ENCODE measurements at regions of chr7 and their contacts with region 1.

Region 1: DNA sequence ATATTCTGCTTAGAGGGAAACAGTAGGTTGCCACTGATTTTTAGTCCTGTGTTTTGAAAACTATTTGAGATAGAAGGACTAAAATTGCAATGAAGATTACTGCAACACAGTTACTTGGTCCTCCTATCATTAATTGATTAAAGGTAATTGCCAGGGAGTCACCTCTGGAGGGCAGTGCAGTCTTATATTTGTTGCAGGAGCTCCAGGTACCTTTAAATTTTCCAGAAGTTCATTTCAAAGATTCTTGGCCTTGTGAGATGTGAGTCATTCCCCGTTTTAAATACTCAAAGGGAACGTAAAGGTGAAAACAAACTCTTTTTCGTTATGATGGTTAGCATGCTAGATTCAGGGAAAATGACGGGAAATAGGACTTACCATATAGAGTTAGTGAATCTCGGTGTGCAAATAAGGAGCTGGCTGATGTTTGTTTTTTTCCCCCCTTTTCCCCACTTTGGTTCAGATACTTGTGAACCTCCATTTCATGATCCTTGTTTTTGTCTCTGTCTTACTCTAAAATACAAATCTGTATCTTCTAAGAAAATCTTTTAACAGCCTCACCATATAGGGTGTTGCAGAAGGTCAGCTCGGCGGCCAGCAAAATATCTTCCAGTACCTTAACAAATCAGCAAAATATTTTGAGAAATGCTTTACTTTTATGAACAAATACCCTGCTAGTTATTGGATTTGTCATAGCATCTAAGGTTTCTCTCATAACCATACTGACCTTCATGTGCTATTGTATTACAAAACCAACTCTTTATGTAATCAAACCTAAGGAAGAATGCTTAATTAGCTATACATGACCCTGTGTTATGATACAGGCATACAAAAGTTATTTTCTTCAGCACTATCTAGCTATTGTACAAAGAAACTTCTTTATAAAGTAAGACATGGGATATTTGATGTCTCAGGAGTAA is 143.0 kb upstream of the HDAC9 start:
- DNase-seq: no peak
- ATAC-seq: peak; percentile 74
- H3K4me3 ChIP-seq: no peak overlapping the region
- H3K27ac ChIP-seq: no peak overlapping the region
- H3K4me1 ChIP-seq: no peaks in the 10 kb centered on the region
- H3K27me3 ChIP-seq: no peaks in the 10 kb centered on the region
- CTCF ChIP-seq: peak; percentile 42 to 73 (median 63); a peak in 5 of 6 replicates
- EP300 ChIP-seq: no peak
- POLR2A ChIP-seq: no peak
- RAD21 ChIP-seq: peak; percentile 81

Region 2: DNA sequence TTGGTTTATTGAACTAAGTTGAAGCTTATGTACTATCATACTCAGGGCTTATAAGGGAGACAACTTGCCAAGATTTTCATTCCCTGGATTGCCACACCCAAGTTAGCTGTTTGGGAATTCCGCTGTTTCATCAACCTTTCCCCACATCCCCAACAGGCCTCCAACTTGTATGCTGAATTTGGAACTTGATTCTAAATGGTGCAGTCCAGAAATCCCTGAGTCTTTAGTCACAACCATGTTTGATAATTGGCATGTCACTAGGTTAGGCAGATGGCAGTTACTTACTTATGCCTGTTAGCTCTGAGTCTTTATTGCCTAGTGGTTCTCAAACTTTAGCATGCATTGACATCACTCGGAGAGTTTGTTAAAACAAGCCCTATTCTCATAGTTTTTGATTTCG is 189.5 kb before region 1 on chr7:
- CTCF ChIA-PET with region 1: no interaction called
- POLR2A ChIA-PET with region 1: no interaction called
- RAD21 ChIA-PET with region 1: no interaction called
- SMC1A ChIA-PET with region 1: no interaction called
- in situ Hi-C with region 1: no loop called
- intact Hi-C with region 1: no loop called
- DNase-seq: no peak
- ATAC-seq: no peak
- H3K4me3 ChIP-seq: no peak overlapping the region
- H3K27ac ChIP-seq: no peak overlapping the region
- H3K4me1 ChIP-seq: no peaks in the 10 kb centered on the region
- H3K27me3 ChIP-seq: 0 out of 4 replicates have a peak, but pooled peaks cover 0 to 2% of the 10 kb centered on the region in 2 experiments
- CTCF ChIP-seq: no peak
- EP300 ChIP-seq: no peak
- POLR2A ChIP-seq: no peak
- RAD21 ChIP-seq: no peak

Region 3: DNA sequence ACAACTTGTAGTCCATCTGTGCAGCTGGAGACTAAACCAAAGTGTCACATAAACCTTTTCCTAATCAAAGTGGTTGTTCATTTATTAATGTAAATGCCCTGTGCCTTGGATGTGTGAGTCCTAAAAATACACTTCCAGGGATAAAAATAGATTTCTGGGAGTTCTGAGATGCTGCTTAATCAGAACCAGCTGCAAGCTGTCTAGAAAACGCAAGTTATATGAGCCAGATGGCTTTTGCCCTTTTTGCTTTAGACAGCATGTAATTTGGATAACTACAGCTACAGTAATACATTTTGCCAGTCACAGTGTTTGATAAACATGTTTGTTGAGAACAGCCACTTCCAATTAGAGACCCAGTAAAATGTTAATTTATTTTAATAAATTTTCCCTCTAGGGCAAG is 139.8 kb before region 1 on chr7:
- CTCF ChIA-PET with region 1: interaction called, 26 read pairs
- POLR2A ChIA-PET with region 1: no interaction called
- RAD21 ChIA-PET with region 1: interaction called, 3 read pairs
- SMC1A ChIA-PET with region 1: interaction called, 4 read pairs
- in situ Hi-C with region 1: no loop called
- intact Hi-C with region 1: no loop called
- DNase-seq: no peak
- ATAC-seq: no peak
- H3K4me3 ChIP-seq: no peak overlapping the region
- H3K27ac ChIP-seq: no peak overlapping the region
- H3K4me1 ChIP-seq: no peaks in the 10 kb centered on the region
- H3K27me3 ChIP-seq: no peaks in the 10 kb centered on the region; a peak in 1 of 4 replicates
- CTCF ChIP-seq: no peak
- EP300 ChIP-seq: no peak
- POLR2A ChIP-seq: no peak
- RAD21 ChIP-seq: no peak

Region 4: GRCh38 chr7:18508443-18509427 is 156.1 kb after region 1 on chr7:
- CTCF ChIA-PET with region 1: interaction called, 5 read pairs
- POLR2A ChIA-PET with region 1: interaction called, 3 read pairs
- RAD21 ChIA-PET with region 1: no interaction called
- SMC1A ChIA-PET with region 1: interaction called, 3 read pairs
- in situ Hi-C with region 1: no loop called
- intact Hi-C with region 1: loop called (anchors 5 kb)
- DNase-seq: no peak
- ATAC-seq: peak; percentile 91
- H3K4me3 ChIP-seq: peak overlapping the region; percentile 47
- H3K27ac ChIP-seq: peak overlapping the region; percentile 80
- H3K4me1 ChIP-seq: peaks cover 20% of the 10 kb centered on the region
- H3K27me3 ChIP-seq: no peaks in the 10 kb centered on the region
- CTCF ChIP-seq: no peak
- EP300 ChIP-seq: no peak
- POLR2A ChIP-seq: peak; percentile 18
- RAD21 ChIP-seq: no peak

Region 5: DNA sequence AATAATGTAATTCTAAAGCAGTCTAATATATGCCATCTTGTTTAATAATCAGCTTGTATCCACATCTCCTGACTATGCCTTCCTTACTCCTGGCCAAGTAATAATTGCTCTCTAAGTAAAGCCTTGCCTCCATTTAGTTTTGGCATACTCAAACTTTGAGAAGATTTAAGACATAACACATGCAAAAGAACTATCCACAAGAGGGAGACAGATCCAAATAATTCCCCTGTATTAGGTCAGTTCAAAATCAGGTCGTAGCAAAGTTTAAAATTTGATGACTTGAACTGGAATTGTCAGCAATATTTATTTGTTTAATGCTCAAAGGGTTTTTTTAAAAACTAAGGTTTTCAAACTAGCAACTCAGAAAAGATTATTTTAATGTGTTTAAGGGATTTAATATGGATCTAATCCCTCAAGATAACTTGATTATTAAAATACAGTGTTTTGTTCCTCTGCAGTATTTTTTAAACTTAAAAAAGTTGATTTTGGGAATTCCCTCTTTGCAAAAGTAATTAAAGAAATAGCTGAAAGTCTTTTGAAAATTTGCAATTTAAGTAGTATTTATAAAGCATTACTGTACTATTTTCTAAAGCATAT is 238.2 kb after region 1 on chr7:
- CTCF ChIA-PET with region 1: interaction called, 16 read pairs
- POLR2A ChIA-PET with region 1: no interaction called
- RAD21 ChIA-PET with region 1: interaction called, 3 read pairs
- SMC1A ChIA-PET with region 1: interaction called, 5 read pairs
- in situ Hi-C with region 1: no loop called
- intact Hi-C with region 1: no loop called
- DNase-seq: no peak
- ATAC-seq: peak; percentile 69
- H3K4me3 ChIP-seq: no peak overlapping the region
- H3K27ac ChIP-seq: no peak overlapping the region
- H3K4me1 ChIP-seq: no peaks in the 10 kb centered on the region
- H3K27me3 ChIP-seq: no peaks in the 10 kb centered on the region
- CTCF ChIP-seq: peak; percentile 22 to 39 (median 30); a peak in 3 of 6 replicates
- EP300 ChIP-seq: no peak
- POLR2A ChIP-seq: no peak
- RAD21 ChIP-seq: peak; percentile 53

Region 6: DNA sequence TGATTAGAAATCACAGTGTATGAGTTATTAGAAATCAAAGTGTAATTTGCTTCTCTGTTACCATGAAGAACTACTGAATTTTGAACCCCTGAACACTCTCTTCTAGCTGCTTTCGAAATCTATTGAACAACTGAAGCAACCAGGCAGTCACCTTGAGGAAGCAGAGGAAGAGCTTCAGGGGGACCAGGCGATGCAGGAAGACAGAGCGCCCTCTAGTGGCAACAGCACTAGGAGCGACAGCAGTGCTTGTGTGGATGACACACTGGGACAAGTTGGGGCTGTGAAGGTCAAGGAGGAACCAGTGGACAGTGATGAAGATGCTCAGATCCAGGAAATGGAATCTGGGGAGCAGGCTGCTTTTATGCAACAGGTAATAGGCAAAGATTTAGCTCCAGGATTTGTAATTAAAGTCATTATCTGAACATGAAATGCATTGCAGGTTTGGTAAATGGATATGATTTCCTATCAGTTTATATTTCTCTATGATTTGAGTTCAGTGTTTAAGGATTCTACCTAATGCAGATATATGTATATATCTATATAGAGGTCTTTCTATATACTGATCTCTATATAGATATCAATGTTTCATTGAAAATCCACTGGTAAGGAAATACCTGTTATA is 313.6 kb after region 1 on chr7:
- CTCF ChIA-PET with region 1: interaction called, 58 read pairs
- POLR2A ChIA-PET with region 1: no interaction called
- RAD21 ChIA-PET with region 1: interaction called, 18 read pairs
- SMC1A ChIA-PET with region 1: interaction called, 30 read pairs
- in situ Hi-C with region 1: loop called (anchors 5 kb)
- intact Hi-C with region 1: loop called (anchors 1 kb)
- DNase-seq: peak; percentile 16
- ATAC-seq: peak; percentile 100
- H3K4me3 ChIP-seq: no peak overlapping the region
- H3K27ac ChIP-seq: no peak overlapping the region
- H3K4me1 ChIP-seq: no peaks in the 10 kb centered on the region
- H3K27me3 ChIP-seq: no peaks in the 10 kb centered on the region
- CTCF ChIP-seq: peak; percentile 92 to 98 (median 97)
- EP300 ChIP-seq: no peak
- POLR2A ChIP-seq: no peak
- RAD21 ChIP-seq: peak; percentile 76

Region 7: GRCh38 chr7:19665399-19666008 is 1312.9 kb after region 1 on chr7:
- CTCF ChIA-PET with region 1: interaction called, 5 read pairs
- POLR2A ChIA-PET with region 1: no interaction called
- RAD21 ChIA-PET with region 1: interaction called, 3 read pairs
- SMC1A ChIA-PET with region 1: no interaction called
- in situ Hi-C with region 1: loop called (anchors 10 kb)
- intact Hi-C with region 1: loop called (anchors 5 kb)
- DNase-seq: no peak
- ATAC-seq: peak; percentile 77
- H3K4me3 ChIP-seq: no peak overlapping the region
- H3K27ac ChIP-seq: no peak overlapping the region
- H3K4me1 ChIP-seq: no peaks in the 10 kb centered on the region
- H3K27me3 ChIP-seq: no peaks in the 10 kb centered on the region
- CTCF ChIP-seq: peak; percentile 38 to 68 (median 49); a peak in 3 of 6 replicates
- EP300 ChIP-seq: no peak
- POLR2A ChIP-seq: no peak
- RAD21 ChIP-seq: peak; percentile 64

Measured in GM12878 (cell line).